Right cardiac atrium (tissue), 5 donors: ENCODE measurements at regions of chr11 and their contacts with region 1.

Region 1: GRCh38 chr11:111454561-111455192 is 57.5 kb downstream of the BTG4 start:
- DNase-seq: peak in 2 of 3 donors; percentile 60 to 63
- ATAC-seq: peak in 1 of 2 donors; percentile 36
- H3K4me3 ChIP-seq: no peak overlapping the region
- H3K27ac ChIP-seq: no peak overlapping the region
- H3K4me1 ChIP-seq: no peaks in the 10 kb centered on the region
- H3K27me3 ChIP-seq: no peaks in the 10 kb centered on the region

Region 2: GRCh38 chr11:111324277-111324720 is 130.4 kb before region 1 on chr11:
- intact Hi-C with region 1: no loop called
- DNase-seq: no peak
- ATAC-seq: no peak
- H3K4me3 ChIP-seq: no peak overlapping the region
- H3K27ac ChIP-seq: no peak overlapping the region
- H3K4me1 ChIP-seq: peaks cover 4% of the 10 kb centered on the region
- H3K27me3 ChIP-seq: no peaks in the 10 kb centered on the region

Region 3: DNA sequence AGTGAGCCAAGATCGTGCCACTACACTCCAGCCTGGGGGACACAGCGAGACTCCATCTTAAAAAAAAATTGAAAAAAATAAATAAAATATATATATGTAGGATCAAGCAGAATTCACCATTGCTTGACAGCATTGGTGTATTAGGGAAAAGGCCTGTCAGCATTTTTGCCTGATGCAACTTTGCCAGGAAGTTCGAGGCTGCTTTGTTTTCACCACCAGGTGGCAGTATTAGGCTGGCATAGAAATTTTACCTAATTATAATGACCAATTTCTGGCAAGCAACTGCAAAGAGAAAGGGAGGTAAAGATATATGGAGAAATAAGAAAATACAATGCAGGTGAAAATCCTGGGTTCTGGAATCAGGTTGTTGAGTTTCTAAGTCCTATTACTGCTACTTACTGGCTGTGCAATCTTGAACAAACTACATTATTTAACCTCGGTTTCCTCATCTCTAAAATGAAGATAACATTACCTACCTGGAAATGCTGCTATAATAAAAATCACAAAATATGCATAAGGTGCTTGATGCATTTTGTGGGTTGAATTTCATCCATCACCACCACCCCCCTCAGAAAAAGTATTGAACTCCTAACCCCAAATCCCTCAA is 110.5 kb after region 1 on chr11:
- intact Hi-C with region 1: loop called in 1 of 4 experiments (anchors 10 kb)
- DNase-seq: peak; percentile 35 to 68 (median 64)
- ATAC-seq: peak in 1 of 2 donors; percentile 50
- H3K4me3 ChIP-seq: no peak overlapping the region
- H3K27ac ChIP-seq: no peak overlapping the region
- H3K4me1 ChIP-seq: peaks cover 2% of the 10 kb centered on the region
- H3K27me3 ChIP-seq: no peaks in the 10 kb centered on the region